GM12878 (cell line): ENCODE measurements at regions of chr9 and their contacts with region 1.

Region 1: DNA sequence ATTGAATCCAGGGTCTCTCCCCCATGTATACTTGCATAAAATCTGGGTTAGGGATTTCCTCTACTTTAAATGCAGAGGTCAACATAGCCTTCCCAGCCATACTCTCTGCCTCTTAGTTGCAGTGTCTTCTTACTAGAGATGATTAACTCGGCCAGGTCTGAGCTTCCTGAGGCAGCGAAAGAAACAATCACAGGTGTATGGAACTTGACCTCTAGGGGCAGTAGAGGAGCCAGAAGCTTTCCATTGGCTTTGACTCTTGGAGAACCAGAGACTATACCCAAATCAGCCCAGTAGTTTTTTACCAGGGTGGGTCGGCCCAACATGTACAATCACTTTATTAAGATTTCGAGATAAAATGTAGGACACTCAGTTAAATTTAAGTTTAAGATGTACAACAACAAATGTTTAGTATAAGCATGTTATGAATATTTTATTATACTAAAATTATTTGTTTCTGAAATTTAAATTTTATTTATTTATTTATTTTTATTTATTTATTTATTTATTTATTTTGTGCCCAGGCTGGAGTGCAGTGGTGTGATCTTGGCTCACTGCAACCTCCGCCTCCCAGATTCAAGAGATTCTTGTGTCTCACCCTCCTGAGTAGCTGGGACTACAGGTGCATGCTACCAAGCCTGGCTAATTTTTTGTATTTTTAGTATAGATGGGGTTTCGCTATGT is 48.0 kb upstream of the DMRT3 start:
- DNase-seq: no peak
- ATAC-seq: peak; percentile 86
- H3K4me3 ChIP-seq: no peak overlapping the region
- H3K27ac ChIP-seq: no peak overlapping the region
- H3K4me1 ChIP-seq: no peaks in the 10 kb centered on the region
- H3K27me3 ChIP-seq: no peaks in the 10 kb centered on the region; a peak in 1 of 4 replicates
- CTCF ChIP-seq: peak; percentile 25 to 64 (median 62); a peak in 5 of 6 replicates
- EP300 ChIP-seq: no peak
- POLR2A ChIP-seq: no peak
- RAD21 ChIP-seq: no peak

Region 2: GRCh38 chr9:899440-900184 is 28.9 kb before region 1 on chr9:
- CTCF ChIA-PET with region 1: interaction called, 37 read pairs
- POLR2A ChIA-PET with region 1: no interaction called
- RAD21 ChIA-PET with region 1: interaction called, 3 read pairs
- SMC1A ChIA-PET with region 1: interaction called, 12 read pairs
- in situ Hi-C with region 1: no loop called
- intact Hi-C with region 1: no loop called
- DNase-seq: peak; percentile 36
- ATAC-seq: peak; percentile 74
- H3K4me3 ChIP-seq: no peak overlapping the region
- H3K27ac ChIP-seq: no peak overlapping the region
- H3K4me1 ChIP-seq: peaks cover 13% of the 10 kb centered on the region
- H3K27me3 ChIP-seq: no peaks in the 10 kb centered on the region
- CTCF ChIP-seq: no peak
- EP300 ChIP-seq: peak; percentile 50 to 84
- POLR2A ChIP-seq: no peak
- RAD21 ChIP-seq: no peak

Region 3: DNA sequence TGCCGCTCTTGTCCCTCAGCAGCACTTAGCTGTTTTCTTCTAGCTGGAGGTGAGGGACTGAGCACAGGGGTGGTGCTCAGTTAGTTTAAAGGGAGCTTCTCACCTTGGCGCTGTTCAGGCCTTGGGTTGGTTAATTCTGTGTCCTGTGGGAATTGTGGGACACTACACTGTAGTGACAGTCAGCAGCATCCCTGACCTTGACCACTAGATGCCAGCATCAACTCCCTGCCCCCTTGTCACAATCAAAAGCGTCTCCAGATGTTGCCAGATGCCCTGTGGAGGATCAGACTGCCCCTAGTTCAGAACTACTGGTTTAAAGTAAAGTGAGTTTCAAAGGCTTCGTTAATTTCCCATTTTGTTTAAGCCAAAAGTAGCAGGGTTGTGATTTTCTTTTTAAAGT is 17.5 kb before region 1 on chr9:
- CTCF ChIA-PET with region 1: interaction called, 35 read pairs
- POLR2A ChIA-PET with region 1: interaction called, 3 read pairs
- RAD21 ChIA-PET with region 1: no interaction called
- SMC1A ChIA-PET with region 1: no interaction called
- in situ Hi-C with region 1: no loop called
- intact Hi-C with region 1: no loop called
- DNase-seq: no peak
- ATAC-seq: peak; percentile 87
- H3K4me3 ChIP-seq: no peak overlapping the region
- H3K27ac ChIP-seq: no peak overlapping the region
- H3K4me1 ChIP-seq: no peaks in the 10 kb centered on the region
- H3K27me3 ChIP-seq: peaks cover 4 to 6% of the 10 kb centered on the region in 2 experiments
- CTCF ChIP-seq: peak; percentile 8 to 27 (median 22); a peak in 1 of 6 replicates
- EP300 ChIP-seq: no peak
- POLR2A ChIP-seq: no peak
- RAD21 ChIP-seq: no peak

Region 4: DNA sequence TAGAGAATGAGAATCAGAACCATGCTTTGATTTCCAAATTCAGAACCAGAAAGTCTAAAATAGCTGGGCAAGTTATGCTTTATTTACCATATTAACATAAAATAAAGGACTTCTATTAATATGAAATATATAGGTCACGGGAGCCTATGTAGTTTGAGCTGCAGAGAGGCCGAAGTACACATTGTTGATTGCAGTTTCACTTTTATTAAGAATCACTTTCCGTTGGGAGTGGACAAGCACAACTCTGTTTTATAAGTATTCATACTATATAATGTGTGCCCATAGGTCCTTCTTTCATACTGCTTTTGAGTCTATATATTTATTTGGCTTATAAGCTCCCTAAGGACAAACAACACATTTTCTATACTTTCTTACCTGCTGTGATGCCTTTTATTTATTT is 10.8 kb before region 1 on chr9:
- CTCF ChIA-PET with region 1: interaction called, 35 read pairs
- POLR2A ChIA-PET with region 1: no interaction called
- RAD21 ChIA-PET with region 1: no interaction called
- SMC1A ChIA-PET with region 1: interaction called, 19 read pairs
- in situ Hi-C with region 1: no loop called
- intact Hi-C with region 1: no loop called
- DNase-seq: no peak
- ATAC-seq: peak; percentile 77
- H3K4me3 ChIP-seq: no peak overlapping the region
- H3K27ac ChIP-seq: no peak overlapping the region
- H3K4me1 ChIP-seq: no peaks in the 10 kb centered on the region
- H3K27me3 ChIP-seq: no peaks in the 10 kb centered on the region
- CTCF ChIP-seq: no peak
- EP300 ChIP-seq: no peak
- POLR2A ChIP-seq: no peak
- RAD21 ChIP-seq: no peak